ENCODE measurements at regions of chr17 and their contacts with region 1.

Region 1: DNA sequence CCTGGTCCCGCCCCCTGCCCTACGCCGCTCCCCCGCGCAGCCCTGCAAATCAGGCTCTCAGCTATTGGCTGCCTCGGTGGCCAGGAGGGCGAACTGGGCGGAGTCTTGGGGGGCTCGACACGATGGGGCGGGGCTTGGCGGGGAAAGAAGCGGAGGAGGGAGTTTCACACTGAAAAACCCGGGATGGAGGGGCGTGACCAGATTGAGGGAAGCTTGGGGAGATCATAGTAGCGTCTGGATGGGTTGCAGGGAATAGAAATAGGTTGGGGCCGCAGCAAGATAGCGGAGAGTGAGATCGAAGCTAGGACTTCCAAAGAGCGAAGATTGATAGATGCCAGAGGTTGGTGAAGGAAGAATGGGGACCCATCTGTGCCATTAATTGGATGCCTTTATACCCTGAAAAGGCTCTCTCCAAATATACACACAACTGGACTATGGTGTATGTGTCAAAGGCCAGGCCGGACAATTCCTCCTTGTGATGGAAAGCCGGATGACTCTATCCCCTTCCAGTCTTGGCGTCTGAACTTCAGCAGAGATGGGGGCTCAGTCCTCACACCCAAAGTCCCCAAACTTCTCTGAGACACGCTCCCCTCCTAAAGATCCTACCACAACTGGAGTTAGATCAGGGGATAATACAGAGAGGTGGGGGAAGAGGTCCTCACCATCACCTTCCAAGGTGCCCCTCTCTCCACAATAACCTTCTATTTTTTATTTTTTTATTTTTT is 376 bp upstream of the STAC2 start:
- DNase-seq: peak; percentile 36
- H3K4me3 ChIP-seq: peak overlapping the region in 2 of 3 experiments; percentile 9 to 26
- H3K27ac ChIP-seq: no peak overlapping the region
- H3K4me1 ChIP-seq: peaks cover 14% of the 10 kb centered on the region
- H3K27me3 ChIP-seq: peaks cover 28 to 31% of the 10 kb centered on the region in 2 experiments
- CTCF ChIP-seq: no peak
- POLR2A ChIP-seq: no peak

Region 2: DNA sequence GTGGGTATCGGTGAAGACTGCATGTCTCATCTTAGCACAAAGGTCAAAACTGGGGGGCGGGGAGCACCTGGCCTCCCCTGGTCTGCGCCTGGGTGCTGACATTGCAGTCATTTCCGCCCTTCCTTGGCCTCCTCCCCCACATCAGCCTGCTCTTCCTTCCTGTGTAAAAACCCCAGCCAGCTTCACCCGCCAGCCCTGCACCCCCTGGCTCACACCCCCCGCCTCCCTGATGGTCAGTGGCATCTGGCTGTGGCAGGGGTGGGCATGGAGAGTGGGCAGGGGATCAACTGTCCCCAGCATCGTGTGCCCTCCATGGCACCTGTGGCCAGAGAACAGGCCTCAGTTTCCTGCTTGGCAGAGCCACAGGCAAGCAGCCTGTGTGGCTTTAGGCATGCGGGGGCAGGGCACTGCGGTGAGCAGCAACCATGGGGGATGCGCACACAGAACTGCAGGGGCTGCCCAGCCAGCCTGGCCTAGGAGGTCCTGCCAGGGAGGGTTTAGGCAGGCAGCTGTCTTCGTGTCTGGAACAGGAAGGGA is 327.2 kb before region 1 on chr17:
- CTCF ChIA-PET with region 1: no interaction called
- POLR2A ChIA-PET with region 1: no interaction called
- dilution Hi-C with region 1: no loop called
- intact Hi-C with region 1: no loop called
- DNase-seq: peak; percentile 41
- H3K4me3 ChIP-seq: no peak overlapping the region
- H3K27ac ChIP-seq: peak overlapping the region; percentile 51
- H3K4me1 ChIP-seq: peaks cover 60% of the 10 kb centered on the region
- H3K27me3 ChIP-seq: no peaks in the 10 kb centered on the region
- CTCF ChIP-seq: no peak
- POLR2A ChIP-seq: no peak

Region 3: GRCh38 chr17:39183720-39184119 is 42.4 kb before region 1 on chr17:
- CTCF ChIA-PET with region 1: no interaction called
- POLR2A ChIA-PET with region 1: no interaction called
- dilution Hi-C with region 1: no loop called
- intact Hi-C with region 1: no loop called
- DNase-seq: no peak
- H3K4me3 ChIP-seq: no peak overlapping the region
- H3K27ac ChIP-seq: no peak overlapping the region
- H3K4me1 ChIP-seq: peaks cover 2% of the 10 kb centered on the region
- H3K27me3 ChIP-seq: no peaks in the 10 kb centered on the region
- CTCF ChIP-seq: no peak
- POLR2A ChIP-seq: no peak

Region 4: GRCh38 chr17:39199820-39200069 is 26.4 kb before region 1 on chr17:
- CTCF ChIA-PET with region 1: interaction called, 112 read pairs
- POLR2A ChIA-PET with region 1: no interaction called
- dilution Hi-C with region 1: no loop called
- intact Hi-C with region 1: loop called (anchors 2 kb)
- DNase-seq: peak; percentile 92
- H3K4me3 ChIP-seq: peak overlapping the region; percentile 81 to 99 (median 96)
- H3K27ac ChIP-seq: peak overlapping the region; percentile 99
- H3K4me1 ChIP-seq: peaks cover 23% of the 10 kb centered on the region
- H3K27me3 ChIP-seq: no peaks in the 10 kb centered on the region
- CTCF ChIP-seq: no peak
- POLR2A ChIP-seq: peak; percentile 46